RWPE1 (cell line): ENCODE measurements at regions of chr9 and their contacts with region 1.

Region 1: GRCh38 chr9:84174486-84174885 is 166.1 kb downstream of the SLC28A3 start:
- DNase-seq: no peak
- H3K27ac ChIP-seq: no peak overlapping the region
- CTCF ChIP-seq: no peak

Region 2: GRCh38 chr9:84163052-84163650 is 11.3 kb before region 1 on chr9:
- CTCF ChIA-PET with region 1: interaction called, 14 read pairs
- POLR2A ChIA-PET with region 1: no interaction called
- DNase-seq: no peak
- H3K27ac ChIP-seq: no peak overlapping the region
- CTCF ChIP-seq: no peak